OCI-LY7 (cell line): ENCODE measurements at regions of chr1 and their contacts with region 1.

Region 1: DNA sequence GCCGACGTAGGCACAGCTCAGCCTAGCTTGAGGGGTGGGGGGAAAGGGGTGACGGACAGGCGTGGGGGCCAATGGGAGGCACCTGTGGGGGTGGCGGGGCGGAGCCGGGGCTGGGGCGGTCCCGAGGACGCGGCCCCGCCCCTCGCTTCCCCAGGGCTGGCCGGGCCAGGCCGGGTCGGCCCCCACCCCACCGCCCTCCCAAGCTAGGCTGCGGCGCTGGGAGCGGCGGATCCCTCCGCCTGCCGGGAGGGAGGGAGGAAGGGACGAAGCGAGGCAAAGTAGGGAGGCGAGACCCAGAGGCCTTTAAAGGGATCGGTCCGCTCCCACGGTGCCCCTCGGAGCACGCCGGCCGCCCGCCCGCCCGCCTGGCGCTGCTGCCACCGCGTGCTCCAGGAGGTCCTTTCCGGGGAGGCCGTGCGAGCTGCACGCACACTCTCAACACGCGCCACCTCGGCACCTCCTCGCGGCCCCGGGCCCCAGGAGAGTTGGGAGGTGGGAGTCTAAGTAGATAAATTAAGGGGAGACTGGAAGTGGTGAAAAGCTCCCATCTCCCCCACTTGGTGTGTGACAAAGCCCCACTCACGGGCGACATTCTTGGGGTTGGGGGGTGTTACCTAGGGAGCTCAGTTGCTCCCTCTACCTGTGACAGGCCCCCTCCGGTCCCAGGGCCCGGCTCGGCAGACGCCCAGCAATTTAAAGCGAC is 373 bp upstream of the MEF2D start:
- DNase-seq: peak; percentile 94
- H3K4me3 ChIP-seq: peak overlapping the region; percentile 98
- H3K27ac ChIP-seq: peak overlapping the region; percentile 98
- H3K4me1 ChIP-seq: peaks cover 66% of the 10 kb centered on the region
- CTCF ChIP-seq: peak; percentile 82

Region 2: DNA sequence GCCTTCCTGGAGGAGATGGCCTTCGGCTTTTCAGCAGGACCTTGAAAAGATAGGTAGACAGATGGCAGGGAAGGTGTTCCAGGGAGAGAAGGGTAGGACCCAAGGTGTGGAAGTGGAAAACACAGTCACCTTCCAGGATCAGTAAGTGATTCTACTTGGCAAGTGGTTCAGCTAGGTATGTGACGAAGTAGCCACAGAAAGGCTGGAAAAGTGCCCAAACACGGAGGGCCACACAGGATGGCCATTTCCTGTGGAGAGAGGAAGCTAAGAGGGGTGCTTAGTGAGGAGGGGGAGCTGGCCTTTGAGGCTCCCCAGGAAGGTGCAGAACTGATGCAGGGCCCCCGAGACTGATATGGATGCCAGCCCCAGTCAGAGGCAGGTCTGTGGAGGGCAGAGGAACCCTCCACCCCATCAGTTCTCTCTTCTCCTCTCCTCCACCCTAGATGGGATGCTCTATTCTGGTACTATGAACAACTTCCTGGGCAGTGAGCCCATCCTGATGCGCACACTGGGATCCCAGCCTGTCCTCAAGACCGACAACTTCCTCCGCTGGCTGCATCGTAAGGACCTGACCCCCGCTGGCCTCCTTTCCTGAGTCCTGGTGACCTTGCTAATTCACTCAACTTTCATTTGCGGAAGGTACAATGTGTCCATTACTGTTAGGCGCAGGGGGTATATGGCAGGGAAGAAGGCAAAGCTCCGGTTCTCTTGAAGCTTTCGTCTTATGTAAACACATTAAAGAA is 340.8 kb before region 1 on chr1:
- CTCF ChIA-PET with region 1: no interaction called
- POLR2A ChIA-PET with region 1: no interaction called
- intact Hi-C with region 1: loop called (anchors 5 kb)
- DNase-seq: no peak
- H3K4me3 ChIP-seq: no peak overlapping the region
- H3K27ac ChIP-seq: peak overlapping the region; percentile 95
- H3K4me1 ChIP-seq: peaks cover 50% of the 10 kb centered on the region
- CTCF ChIP-seq: no peak

Region 3: GRCh38 chr1:156346636-156347035 is 154.3 kb before region 1 on chr1:
- CTCF ChIA-PET with region 1: no interaction called
- POLR2A ChIA-PET with region 1: no interaction called
- intact Hi-C with region 1: no loop called
- DNase-seq: no peak
- H3K4me3 ChIP-seq: no peak overlapping the region
- H3K27ac ChIP-seq: no peak overlapping the region
- H3K4me1 ChIP-seq: no peaks in the 10 kb centered on the region
- CTCF ChIP-seq: no peak

Region 4: DNA sequence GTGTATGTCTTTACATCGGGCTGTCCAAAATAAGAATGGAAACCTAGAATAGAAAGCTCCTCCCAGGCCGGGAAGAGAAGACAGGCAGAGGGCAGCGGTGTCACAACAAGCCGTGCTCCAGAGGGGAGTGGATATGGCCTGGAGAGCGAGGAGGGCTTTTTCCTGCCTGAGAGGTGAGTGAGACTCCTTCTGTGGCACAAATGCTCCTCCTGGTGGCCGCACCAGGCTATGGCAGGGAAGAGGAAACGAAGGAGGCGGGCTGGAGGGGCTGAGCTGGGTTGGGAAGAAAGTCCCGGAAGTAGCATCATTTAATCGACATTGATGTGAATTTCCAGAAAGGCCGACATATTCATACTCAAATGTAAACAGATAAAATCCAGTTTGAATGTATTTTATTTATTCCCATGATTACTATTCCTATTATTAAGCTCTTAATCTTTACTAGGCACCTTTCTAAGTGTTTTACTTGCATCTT is 55.1 kb before region 1 on chr1:
- CTCF ChIA-PET with region 1: no interaction called
- POLR2A ChIA-PET with region 1: no interaction called
- intact Hi-C with region 1: no loop called
- DNase-seq: peak; percentile 74
- H3K4me3 ChIP-seq: no peak overlapping the region
- H3K27ac ChIP-seq: no peak overlapping the region
- H3K4me1 ChIP-seq: peaks cover 6% of the 10 kb centered on the region
- CTCF ChIP-seq: peak; percentile 98

Region 5: DNA sequence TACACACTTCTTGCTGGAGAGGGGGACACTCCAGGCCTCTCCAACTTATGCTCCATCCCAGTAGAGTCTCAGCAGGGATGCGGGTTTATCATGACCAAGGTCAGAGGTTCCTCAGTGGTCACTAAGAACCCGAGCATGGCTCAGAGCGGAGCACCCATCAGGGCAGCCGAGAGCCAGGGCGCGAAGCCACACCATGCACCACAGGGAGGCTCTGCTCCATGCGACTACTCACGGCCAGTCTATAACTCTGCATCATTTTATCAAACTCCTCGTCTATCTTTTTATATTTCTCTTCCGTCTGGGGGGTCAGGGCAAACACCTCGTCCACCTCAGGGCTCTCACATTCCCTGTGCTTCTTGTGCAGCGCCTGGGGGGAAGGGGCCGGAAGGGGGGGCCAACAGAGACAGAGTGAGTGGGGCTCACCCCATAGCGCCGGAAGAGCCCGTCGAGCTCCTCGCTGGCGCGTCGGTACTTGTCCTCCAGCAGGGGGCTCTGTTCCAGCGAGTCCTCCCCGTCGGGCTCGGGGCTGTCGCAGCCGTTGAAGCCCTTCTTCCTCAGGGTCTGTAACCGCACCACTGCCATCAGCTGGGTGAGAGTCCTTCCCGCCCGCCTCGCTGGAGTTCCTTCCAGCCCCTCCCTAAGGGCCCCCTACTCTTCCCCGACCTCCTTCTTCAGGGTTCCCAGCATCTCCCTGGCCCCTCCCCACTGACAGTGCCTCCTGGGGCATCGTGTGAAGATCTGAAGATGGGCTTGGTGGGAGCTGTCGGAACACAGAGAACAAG is 20.3 kb before region 1 on chr1:
- CTCF ChIA-PET with region 1: interaction called, 12 read pairs
- POLR2A ChIA-PET with region 1: interaction called, 13 read pairs
- intact Hi-C with region 1: loop called (anchors 1 kb)
- DNase-seq: peak; percentile 90
- H3K4me3 ChIP-seq: peak overlapping the region; percentile 6
- H3K27ac ChIP-seq: peak overlapping the region; percentile 61
- H3K4me1 ChIP-seq: peaks cover 56% of the 10 kb centered on the region
- CTCF ChIP-seq: peak; percentile 89

Region 6: GRCh38 chr1:156583821-156584622 is 83.1 kb after region 1 on chr1:
- CTCF ChIA-PET with region 1: no interaction called
- POLR2A ChIA-PET with region 1: interaction called, 5 read pairs
- intact Hi-C with region 1: loop called (anchors 2 kb)
- DNase-seq: peak; percentile 90
- H3K4me3 ChIP-seq: peak overlapping the region; percentile 62
- H3K27ac ChIP-seq: peak overlapping the region; percentile 40
- H3K4me1 ChIP-seq: peaks cover 39% of the 10 kb centered on the region
- CTCF ChIP-seq: peak; percentile 88

Region 7: DNA sequence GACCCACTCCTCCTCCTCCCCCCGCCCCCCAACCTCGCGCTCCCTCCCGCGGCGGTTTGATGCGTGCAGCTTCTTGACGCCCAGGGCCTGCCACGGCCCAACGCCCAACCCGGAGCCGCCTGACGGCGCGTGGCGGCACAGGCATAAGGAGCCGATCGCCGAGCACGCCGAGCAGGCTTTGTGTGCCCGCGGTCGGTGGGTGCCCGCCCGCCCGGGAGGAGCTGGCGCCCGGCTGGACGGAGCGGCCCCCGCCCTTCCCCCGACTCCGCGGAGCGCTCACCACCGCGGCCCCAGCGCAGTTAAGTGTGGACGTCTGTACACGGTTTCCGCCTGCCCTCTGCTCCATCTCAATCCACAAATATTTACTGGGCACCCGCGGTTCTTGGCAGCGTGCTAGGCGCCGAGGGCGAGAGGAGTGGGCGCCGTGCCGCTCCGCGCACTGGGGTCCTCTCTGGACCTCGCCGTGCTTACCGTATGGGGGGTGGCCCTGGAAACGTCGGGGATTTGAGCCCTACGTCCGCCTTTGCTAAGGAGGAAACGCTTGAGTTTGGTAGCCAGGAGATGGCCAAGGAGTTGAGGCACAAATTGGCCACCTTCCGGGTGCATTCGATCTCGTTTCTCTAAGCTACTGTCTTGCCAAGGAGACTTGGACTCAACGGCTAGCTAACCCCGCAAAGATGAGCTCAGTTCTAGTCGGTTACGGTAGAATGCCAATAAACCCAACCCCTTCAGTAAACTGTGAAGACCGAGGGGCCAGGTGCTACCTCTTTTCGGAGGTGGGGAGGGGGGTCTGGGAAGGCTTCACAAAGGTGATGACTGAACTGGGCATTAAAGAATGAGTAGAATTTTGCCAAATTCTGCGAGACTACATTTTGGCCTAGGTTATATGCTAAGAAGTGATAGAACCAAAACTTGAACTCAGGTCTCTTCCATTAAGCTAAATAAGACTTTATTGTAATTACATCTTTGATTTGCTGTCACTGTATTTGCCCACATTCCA is 251.1 kb after region 1 on chr1:
- CTCF ChIA-PET with region 1: no interaction called
- POLR2A ChIA-PET with region 1: no interaction called
- intact Hi-C with region 1: loop called (anchors 10 kb)
- DNase-seq: peak; percentile 97
- H3K4me3 ChIP-seq: peak overlapping the region; percentile 85
- H3K27ac ChIP-seq: peak overlapping the region; percentile 81
- H3K4me1 ChIP-seq: peaks cover 40% of the 10 kb centered on the region
- CTCF ChIP-seq: no peak